ENCODE measurements at regions of chr1 and their contacts with region 1.

Region 1: DNA sequence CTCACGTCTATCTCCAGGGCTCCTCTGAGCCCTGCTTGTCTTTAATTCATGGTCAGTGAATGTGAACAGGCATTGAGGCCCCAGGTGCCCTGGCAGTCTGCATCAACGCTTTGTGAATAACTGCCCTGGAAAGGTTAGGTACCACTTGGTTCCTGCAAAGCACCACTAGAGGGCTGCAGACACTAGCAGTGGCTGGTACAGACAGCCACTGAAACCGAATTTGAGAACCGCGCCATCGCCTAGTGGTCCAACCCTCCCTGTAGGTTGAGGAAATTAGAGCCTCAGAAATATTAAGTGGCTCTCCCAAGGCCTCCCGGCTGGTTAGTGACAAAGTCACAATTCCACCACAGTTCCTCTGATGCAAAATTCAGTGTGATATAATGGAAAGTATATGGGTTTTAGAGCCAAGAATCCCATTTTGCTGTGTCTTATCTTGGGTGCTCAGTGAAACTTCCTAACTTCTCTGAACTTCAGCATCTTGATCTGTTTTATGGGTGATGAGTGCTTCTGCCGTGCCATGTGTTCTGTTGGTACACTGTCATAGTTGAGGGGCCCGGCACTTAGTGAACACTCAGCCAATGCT is 46.2 kb upstream of the BCL9 start:
- DNase-seq: peak; percentile 85
- H3K4me3 ChIP-seq: no peak overlapping the region
- H3K27ac ChIP-seq: no peak overlapping the region
- H3K4me1 ChIP-seq: no peaks in the 10 kb centered on the region
- CTCF ChIP-seq: peak; percentile 98

Region 2: GRCh38 chr1:147515046-147515869 is 20.2 kb after region 1 on chr1:
- CTCF ChIA-PET with region 1: no interaction called
- POLR2A ChIA-PET with region 1: no interaction called
- intact Hi-C with region 1: no loop called
- DNase-seq: peak; percentile 40
- H3K4me3 ChIP-seq: no peak overlapping the region
- H3K27ac ChIP-seq: no peak overlapping the region
- H3K4me1 ChIP-seq: no peaks in the 10 kb centered on the region
- CTCF ChIP-seq: peak; percentile 71

Region 3: GRCh38 chr1:147627435-147628110 is 132.5 kb after region 1 on chr1:
- CTCF ChIA-PET with region 1: no interaction called
- POLR2A ChIA-PET with region 1: no interaction called
- intact Hi-C with region 1: loop called (anchors 1 kb)
- DNase-seq: peak; percentile 60
- H3K4me3 ChIP-seq: no peak overlapping the region
- H3K27ac ChIP-seq: no peak overlapping the region
- H3K4me1 ChIP-seq: peaks cover 9% of the 10 kb centered on the region
- CTCF ChIP-seq: peak; percentile 96

Region 4: GRCh38 chr1:147640553-147641165 is 145.6 kb after region 1 on chr1:
- CTCF ChIA-PET with region 1: no interaction called
- POLR2A ChIA-PET with region 1: interaction called, 3 read pairs
- intact Hi-C with region 1: loop called (anchors 1 kb)
- DNase-seq: peak; percentile 81
- H3K4me3 ChIP-seq: no peak overlapping the region
- H3K27ac ChIP-seq: no peak overlapping the region
- H3K4me1 ChIP-seq: no peaks in the 10 kb centered on the region
- CTCF ChIP-seq: peak; percentile 85